ENCODE measurements at regions of chr11 and their contacts with region 1.

Region 1: DNA sequence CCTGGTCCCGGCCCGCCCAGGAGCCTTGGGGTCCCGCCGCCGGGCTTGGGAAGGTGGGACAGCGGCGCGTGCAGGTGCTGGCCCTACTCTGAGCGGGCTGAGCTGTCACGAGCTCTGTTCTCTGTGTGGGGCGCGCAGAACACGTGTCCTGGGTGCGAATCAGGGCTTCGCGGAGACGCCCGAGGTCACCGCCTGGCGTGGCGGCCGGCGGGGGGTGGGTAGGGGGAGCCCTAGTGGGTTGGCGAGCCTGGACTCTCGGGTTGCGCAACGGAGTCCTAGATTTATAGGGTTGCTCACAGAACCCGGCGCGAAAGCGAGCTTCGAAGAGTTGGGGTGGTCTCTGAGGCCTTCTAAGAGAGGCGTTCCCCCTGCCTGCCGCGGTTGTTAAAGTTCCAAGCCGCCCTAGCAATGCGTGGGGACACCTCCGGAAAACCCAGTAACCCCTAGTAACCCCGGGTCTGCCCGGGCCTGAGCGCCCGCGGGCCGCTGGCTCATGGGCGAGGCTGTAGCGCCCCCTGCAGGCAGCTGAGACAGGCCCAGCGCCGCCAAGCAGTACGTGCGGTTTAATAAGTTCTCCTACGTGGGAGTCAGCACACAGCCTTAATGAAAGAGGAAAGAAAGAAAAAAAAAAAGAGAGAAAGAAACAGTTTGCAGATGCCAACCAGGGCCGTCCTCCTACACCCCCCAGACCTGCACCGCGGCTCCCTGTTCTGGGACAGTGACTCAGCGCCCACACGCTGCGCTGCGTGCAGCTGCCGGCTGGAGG is 2.8 kb downstream of the ADM start:
- DNase-seq: peak; percentile 86
- ATAC-seq: peak; percentile 21
- H3K4me3 Mint-ChIP-seq: peak overlapping the region; percentile 97
- H3K27ac Mint-ChIP-seq: peak overlapping the region; percentile 91
- H3K4me1 Mint-ChIP-seq: peaks cover 36% of the 10 kb centered on the region
- H3K27me3 Mint-ChIP-seq: peaks cover 37% of the 10 kb centered on the region
- CTCF ChIP-seq: peak; percentile 100

Region 2: GRCh38 chr11:9757809-9758636 is 549.6 kb before region 1 on chr11:
- CTCF ChIA-PET with region 1: interaction called, 11 read pairs
- POLR2A ChIA-PET with region 1: no interaction called
- DNase-seq: peak; percentile 79
- ATAC-seq: peak; percentile 75
- H3K4me3 Mint-ChIP-seq: peak overlapping the region; percentile 66
- H3K27ac Mint-ChIP-seq: peak overlapping the region; percentile 41; the same call in 1 of the 2 replicates
- H3K4me1 Mint-ChIP-seq: peaks cover 43% of the 10 kb centered on the region
- H3K27me3 Mint-ChIP-seq: 0 out of 2 replicates have a peak, but pooled peaks cover 3% of the 10 kb centered on the region
- CTCF ChIP-seq: peak; percentile 84

Region 3: DNA sequence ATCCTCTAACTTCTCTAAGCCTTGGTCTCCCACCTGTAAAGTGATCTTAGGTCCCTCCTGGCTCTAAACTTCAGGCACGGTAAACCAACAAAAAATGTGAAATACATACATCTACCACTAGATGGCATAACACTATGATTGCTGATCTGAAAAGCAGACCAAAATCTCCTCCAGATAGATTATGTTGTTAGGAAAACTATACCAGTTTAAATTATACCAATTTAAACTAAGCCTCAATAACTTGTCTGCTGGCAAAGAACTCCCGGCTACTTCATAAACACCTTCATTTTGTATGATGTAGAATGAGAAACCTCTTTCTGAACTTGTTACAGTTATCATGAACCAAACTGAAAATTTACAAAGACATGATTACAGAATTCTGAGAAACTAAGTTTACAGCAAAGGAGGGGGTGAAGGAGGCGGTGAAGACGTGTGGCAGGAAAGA is 99.5 kb before region 1 on chr11:
- CTCF ChIA-PET with region 1: interaction called, 38 read pairs
- POLR2A ChIA-PET with region 1: interaction called, 3 read pairs
- DNase-seq: no peak
- ATAC-seq: peak; percentile 76
- H3K4me3 Mint-ChIP-seq: no peak overlapping the region
- H3K27ac Mint-ChIP-seq: no peak overlapping the region
- H3K4me1 Mint-ChIP-seq: peaks cover 6% of the 10 kb centered on the region
- H3K27me3 Mint-ChIP-seq: no peaks in the 10 kb centered on the region
- CTCF ChIP-seq: peak; percentile 70

Region 4: GRCh38 chr11:10322830-10323792 is 15.5 kb after region 1 on chr11:
- CTCF ChIA-PET with region 1: interaction called, 36 read pairs
- POLR2A ChIA-PET with region 1: interaction called, 4 read pairs
- DNase-seq: no peak
- ATAC-seq: peak; percentile 50; the same call in 1 of the 2 replicates
- H3K4me3 Mint-ChIP-seq: no peak overlapping the region
- H3K27ac Mint-ChIP-seq: peak overlapping the region; percentile 47; the same call in 1 of the 2 replicates
- H3K4me1 Mint-ChIP-seq: peaks cover 61% of the 10 kb centered on the region
- H3K27me3 Mint-ChIP-seq: no peaks in the 10 kb centered on the region
- CTCF ChIP-seq: no peak

Region 5: GRCh38 chr11:10366568-10367370 is 59.1 kb after region 1 on chr11:
- CTCF ChIA-PET with region 1: interaction called, 149 read pairs
- POLR2A ChIA-PET with region 1: interaction called, 13 read pairs
- DNase-seq: peak; percentile 90
- ATAC-seq: peak; percentile 99
- H3K4me3 Mint-ChIP-seq: no peak overlapping the region
- H3K27ac Mint-ChIP-seq: peak overlapping the region; percentile 73
- H3K4me1 Mint-ChIP-seq: peaks cover 23% of the 10 kb centered on the region
- H3K27me3 Mint-ChIP-seq: no peaks in the 10 kb centered on the region; the same call in 1 of the 2 replicates
- CTCF ChIP-seq: peak; percentile 87